ENCODE measurements at regions of chr12 and their contacts with region 1.

Region 1: GRCh38 chr12:17778242-17778641 is 311.8 kb downstream of the RERGL start:
- DNase-seq: no peak
- ATAC-seq: no peak
- H3K4me3 ChIP-seq: no peak overlapping the region
- H3K27ac ChIP-seq: no peak overlapping the region
- H3K4me1 ChIP-seq: no peaks in the 10 kb centered on the region
- H3K27me3 ChIP-seq: no peaks in the 10 kb centered on the region
- CTCF ChIP-seq: no peak
- POLR2A ChIP-seq: no peak

Region 2: DNA sequence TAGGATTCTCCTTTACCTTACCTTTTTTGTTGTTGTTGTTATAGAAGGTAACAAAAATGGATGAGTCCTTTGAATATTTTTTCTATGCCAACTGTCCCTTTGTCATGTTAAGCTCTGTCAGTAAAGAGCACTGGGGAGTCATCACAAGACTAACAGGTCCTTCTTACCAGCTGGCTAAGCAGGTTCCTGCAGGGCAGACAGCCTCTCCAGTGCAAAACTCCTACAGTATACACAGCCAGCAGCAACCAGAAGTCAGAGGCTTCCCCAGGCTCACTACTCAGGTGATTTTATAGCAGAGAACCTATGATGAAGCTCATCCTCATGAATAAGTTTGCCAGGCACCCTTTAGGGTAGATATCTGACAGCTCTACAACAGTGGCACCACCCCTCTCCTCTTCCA is 40.7 kb after region 1 on chr12:
- intact Hi-C with region 1: no loop called
- DNase-seq: no peak
- ATAC-seq: no peak
- H3K4me3 ChIP-seq: no peak overlapping the region
- H3K27ac ChIP-seq: no peak overlapping the region
- H3K4me1 ChIP-seq: no peaks in the 10 kb centered on the region
- H3K27me3 ChIP-seq: no peaks in the 10 kb centered on the region
- CTCF ChIP-seq: no peak
- POLR2A ChIP-seq: no peak

Region 3: GRCh38 chr12:17866802-17867201 is 88.6 kb after region 1 on chr12:
- intact Hi-C with region 1: loop called (anchors 2 to 5 kb)
- DNase-seq: no peak
- ATAC-seq: no peak
- H3K4me3 ChIP-seq: no peak overlapping the region
- H3K27ac ChIP-seq: no peak overlapping the region
- H3K4me1 ChIP-seq: no peaks in the 10 kb centered on the region
- H3K27me3 ChIP-seq: no peaks in the 10 kb centered on the region
- CTCF ChIP-seq: no peak
- POLR2A ChIP-seq: no peak

Region 4: DNA sequence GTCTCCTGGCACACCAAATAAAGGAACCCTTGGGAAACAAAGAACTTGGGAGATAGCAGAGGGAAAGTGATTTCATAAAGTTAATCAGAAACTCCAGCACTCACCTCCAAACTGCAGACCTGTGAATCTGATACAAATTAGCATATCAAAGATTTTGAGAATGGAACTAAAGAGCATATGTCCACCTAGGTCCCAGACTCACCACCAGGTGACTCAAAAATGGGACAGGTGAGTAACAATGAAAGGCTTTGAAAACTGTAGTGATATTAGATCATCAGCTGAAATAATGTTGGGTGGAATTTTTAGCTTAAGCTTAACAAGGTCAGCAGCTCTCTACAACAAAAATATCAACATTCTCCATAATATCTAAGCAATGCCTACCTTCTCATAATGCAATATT is 97.0 kb after region 1 on chr12:
- intact Hi-C with region 1: loop called in 2 of 10 experiments (anchors 5 kb)
- DNase-seq: no peak
- ATAC-seq: no peak
- H3K4me3 ChIP-seq: no peak overlapping the region
- H3K27ac ChIP-seq: no peak overlapping the region
- H3K4me1 ChIP-seq: no peaks in the 10 kb centered on the region
- H3K27me3 ChIP-seq: no peaks in the 10 kb centered on the region
- CTCF ChIP-seq: no peak
- POLR2A ChIP-seq: no peak

Region 5: GRCh38 chr12:17884581-17884980 is 106.3 kb after region 1 on chr12:
- intact Hi-C with region 1: loop called in 1 of 10 experiments (anchors 5 kb)
- DNase-seq: no peak
- ATAC-seq: no peak
- H3K4me3 ChIP-seq: no peak overlapping the region
- H3K27ac ChIP-seq: no peak overlapping the region
- H3K4me1 ChIP-seq: no peaks in the 10 kb centered on the region
- H3K27me3 ChIP-seq: no peaks in the 10 kb centered on the region
- CTCF ChIP-seq: no peak
- POLR2A ChIP-seq: no peak